CD4-positive, alpha-beta T cell (primary cell): ENCODE measurements at regions of chr4 and their contacts with region 1.

Region 1: DNA sequence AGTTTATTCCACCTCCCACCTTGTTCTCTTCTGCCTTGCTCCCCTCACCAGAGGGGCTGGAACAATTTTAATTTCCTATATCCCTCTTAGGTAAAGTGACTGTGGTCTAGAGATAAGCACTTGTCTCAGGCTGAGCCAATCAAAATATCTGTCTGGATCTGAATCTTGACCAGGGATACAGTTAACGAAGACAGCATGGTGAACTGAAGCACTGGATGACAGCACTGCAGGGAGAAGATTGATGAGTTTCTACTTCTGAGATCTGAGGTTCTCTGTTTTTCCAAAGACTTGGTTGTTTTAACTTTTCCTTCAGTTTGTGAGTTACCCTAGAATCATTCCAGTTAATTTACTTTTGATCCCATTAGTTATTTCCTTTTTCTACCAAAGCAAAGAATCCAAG is 13.2 kb downstream of the GNPDA2 start:
- DNase-seq: no peak
- ATAC-seq: no peak
- H3K4me3 ChIP-seq: no peak overlapping the region
- H3K4me3 Mint-ChIP-seq: no peak overlapping the region
- H3K27ac ChIP-seq: no peak overlapping the region
- H3K27ac Mint-ChIP-seq: no peak overlapping the region
- H3K4me1 ChIP-seq: no peaks in the 10 kb centered on the region
- H3K4me1 Mint-ChIP-seq: peaks cover 18% of the 10 kb centered on the region
- H3K27me3 ChIP-seq: no peaks in the 10 kb centered on the region
- H3K27me3 Mint-ChIP-seq: no peaks in the 10 kb centered on the region
- CTCF ChIP-seq: no peak

Region 2: DNA sequence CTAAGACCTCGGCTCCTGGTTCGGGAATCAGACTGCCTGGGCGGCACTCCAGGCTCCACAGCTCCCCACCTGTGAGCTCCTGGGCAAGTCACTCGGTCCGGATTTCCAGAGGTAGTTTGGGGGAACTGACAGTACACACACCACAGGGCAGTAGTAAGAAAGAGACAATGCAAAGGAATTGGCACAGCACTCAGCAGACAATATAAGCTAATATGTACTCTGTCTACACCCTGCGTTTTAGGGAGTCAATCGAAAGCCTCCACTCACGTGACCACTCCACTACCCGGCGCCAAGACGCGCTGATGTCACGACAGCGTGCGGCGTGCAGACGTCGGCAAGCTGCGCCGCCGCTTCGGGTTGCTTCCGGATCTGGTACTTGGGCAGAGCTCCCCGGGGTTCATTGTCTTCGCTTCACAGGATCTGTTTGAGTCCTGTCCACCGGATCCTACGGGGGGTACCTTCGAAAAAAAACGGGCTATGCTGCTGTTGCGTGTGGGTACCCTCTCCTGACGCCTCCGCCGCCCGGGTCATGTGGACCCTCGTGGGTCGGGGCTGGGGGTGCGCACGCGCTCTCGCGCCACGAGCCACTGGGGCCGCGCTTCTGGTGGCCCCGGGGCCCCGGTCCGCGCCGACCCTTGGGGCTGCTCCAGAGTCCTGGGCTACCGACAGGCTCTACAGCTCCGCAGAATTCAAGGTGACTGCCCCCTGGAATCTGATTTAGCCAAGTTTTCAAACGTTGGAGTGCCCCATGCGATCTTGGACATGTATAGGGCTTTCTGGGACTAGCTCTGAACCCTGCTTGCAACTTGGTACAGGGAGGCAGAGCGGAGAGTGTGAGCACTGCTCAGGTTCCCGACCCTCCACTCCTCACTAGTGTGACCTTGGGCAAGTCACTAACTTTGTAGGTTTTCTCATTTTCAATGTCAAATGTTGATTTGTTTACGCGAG is 34.8 kb before region 1 on chr4 and contains the start of gene GUF1:
- CTCF ChIA-PET with region 1: no interaction called
- POLR2A ChIA-PET with region 1: interaction called, 11 read pairs
- intact Hi-C with region 1: no loop called
- DNase-seq: peak; percentile 78 to 95 (median 86)
- ATAC-seq: peak; percentile 90
- H3K4me3 ChIP-seq: peak within 1 kb of the TSS; percentile 84
- H3K4me3 Mint-ChIP-seq: peak within 1 kb of the TSS; percentile 99
- H3K27ac ChIP-seq: peak within 1 kb of the TSS; percentile 92 to 95
- H3K27ac Mint-ChIP-seq: peak within 1 kb of the TSS; percentile 100
- H3K4me1 ChIP-seq: peaks cover 7% of the 10 kb centered on the region
- H3K4me1 Mint-ChIP-seq: peaks cover 43% of the 10 kb centered on the region
- H3K27me3 ChIP-seq: no peaks in the 10 kb centered on the region
- H3K27me3 Mint-ChIP-seq: no peaks in the 10 kb centered on the region
- CTCF ChIP-seq: no peak
- total RNA-seq, gene GUF1: 16.7 to 21.1 TPM

Region 3: DNA sequence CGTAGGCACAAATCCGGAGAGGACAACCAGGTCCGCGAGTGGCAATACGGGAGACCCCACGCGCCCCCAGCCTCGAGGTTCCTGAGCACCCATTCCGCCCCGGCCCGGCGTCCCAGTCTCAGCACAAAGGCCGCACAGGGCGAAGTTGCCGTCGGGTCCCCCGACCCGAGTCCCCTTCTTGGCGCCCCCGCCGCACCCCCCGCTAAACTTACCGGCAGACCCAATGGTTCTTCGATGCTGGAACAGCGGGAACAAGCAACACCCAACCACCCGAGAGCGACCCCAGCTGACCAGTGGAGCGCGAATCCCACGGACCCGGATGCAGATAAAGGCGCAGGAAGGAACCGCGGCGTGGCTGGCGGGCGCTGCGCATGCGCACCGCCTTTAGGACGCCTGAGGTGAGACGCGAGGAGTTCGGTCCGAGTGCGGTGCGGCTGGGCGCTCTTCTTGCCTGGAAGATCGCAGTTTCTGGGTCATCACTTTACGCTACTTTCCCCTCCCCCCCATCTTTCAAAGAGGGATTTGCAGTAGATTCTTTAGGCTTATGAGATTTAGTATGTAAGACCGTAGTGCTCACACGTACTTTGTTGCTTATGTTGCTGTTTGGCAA is 13.2 kb after region 1 on chr4 and contains the start of gene GNPDA2:
- CTCF ChIA-PET with region 1: no interaction called
- POLR2A ChIA-PET with region 1: interaction called, 10 read pairs
- intact Hi-C with region 1: loop called in 1 of 2 experiments (anchors 2 kb)
- DNase-seq: peak; percentile 63 to 91 (median 77)
- ATAC-seq: peak; percentile 85
- H3K4me3 ChIP-seq: peak within 1 kb of the TSS; percentile 91
- H3K4me3 Mint-ChIP-seq: peak within 1 kb of the TSS; percentile 95
- H3K27ac ChIP-seq: peak within 1 kb of the TSS in 1 of 2 donors; percentile 50
- H3K27ac Mint-ChIP-seq: peak within 1 kb of the TSS; percentile 83
- H3K4me1 ChIP-seq: peaks cover 25% of the 10 kb centered on the region
- H3K4me1 Mint-ChIP-seq: peaks cover 52% of the 10 kb centered on the region
- H3K27me3 ChIP-seq: no peaks in the 10 kb centered on the region
- H3K27me3 Mint-ChIP-seq: no peaks in the 10 kb centered on the region
- CTCF ChIP-seq: no peak
- total RNA-seq, gene GNPDA2: 7.6 to 9.0 TPM

Region 4: GRCh38 chr4:46211406-46211805 is 1498.3 kb after region 1 on chr4:
- CTCF ChIA-PET with region 1: no interaction called
- POLR2A ChIA-PET with region 1: no interaction called
- intact Hi-C with region 1: no loop called
- DNase-seq: no peak
- ATAC-seq: no peak
- H3K4me3 ChIP-seq: no peak overlapping the region
- H3K4me3 Mint-ChIP-seq: no peak overlapping the region
- H3K27ac ChIP-seq: no peak overlapping the region
- H3K27ac Mint-ChIP-seq: no peak overlapping the region
- H3K4me1 ChIP-seq: no peaks in the 10 kb centered on the region
- H3K4me1 Mint-ChIP-seq: no peaks in the 10 kb centered on the region
- H3K27me3 ChIP-seq: no peaks in the 10 kb centered on the region
- H3K27me3 Mint-ChIP-seq: no peaks in the 10 kb centered on the region
- CTCF ChIP-seq: no peak